Activated CD4-positive, alpha-beta T cell treated with anti-CD3 and anti-CD28 coated beads for 36 hours (primary cell): ENCODE measurements at regions of chr3 and their contacts with region 1.

Region 1: DNA sequence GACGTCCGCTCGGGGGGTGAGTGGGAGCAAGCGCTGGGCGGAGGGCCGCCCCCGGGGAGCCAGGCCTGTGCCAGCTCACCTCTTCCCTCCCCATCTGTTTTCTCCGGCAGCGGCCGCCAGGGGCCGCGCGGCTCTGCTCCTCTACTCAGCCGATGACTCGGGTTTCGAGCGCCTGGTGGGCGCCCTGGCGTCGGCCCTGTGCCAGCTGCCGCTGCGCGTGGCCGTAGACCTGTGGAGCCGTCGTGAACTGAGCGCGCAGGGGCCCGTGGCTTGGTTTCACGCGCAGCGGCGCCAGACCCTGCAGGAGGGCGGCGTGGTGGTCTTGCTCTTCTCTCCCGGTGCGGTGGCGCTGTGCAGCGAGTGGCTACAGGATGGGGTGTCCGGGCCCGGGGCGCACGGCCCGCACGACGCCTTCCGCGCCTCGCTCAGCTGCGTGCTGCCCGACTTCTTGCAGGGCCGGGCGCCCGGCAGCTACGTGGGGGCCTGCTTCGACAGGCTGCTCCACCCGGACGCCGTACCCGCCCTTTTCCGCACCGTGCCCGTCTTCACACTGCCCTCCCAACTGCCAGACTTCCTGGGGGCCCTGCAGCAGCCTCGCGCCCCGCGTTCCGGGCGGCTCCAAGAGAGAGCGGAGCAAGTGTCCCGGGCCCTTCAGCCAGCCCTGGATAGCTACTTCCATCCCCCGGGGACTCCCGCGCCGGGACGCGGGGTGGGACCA is 632 bp upstream of the CRELD1 start:
- DNase-seq: peak; percentile 95
- ATAC-seq: peak; percentile 76
- H3K4me3 Mint-ChIP-seq: peak overlapping the region; percentile 96
- H3K27ac Mint-ChIP-seq: peak overlapping the region; percentile 95
- H3K4me1 Mint-ChIP-seq: peaks cover 29% of the 10 kb centered on the region
- H3K27me3 Mint-ChIP-seq: no peaks in the 10 kb centered on the region

Region 2: DNA sequence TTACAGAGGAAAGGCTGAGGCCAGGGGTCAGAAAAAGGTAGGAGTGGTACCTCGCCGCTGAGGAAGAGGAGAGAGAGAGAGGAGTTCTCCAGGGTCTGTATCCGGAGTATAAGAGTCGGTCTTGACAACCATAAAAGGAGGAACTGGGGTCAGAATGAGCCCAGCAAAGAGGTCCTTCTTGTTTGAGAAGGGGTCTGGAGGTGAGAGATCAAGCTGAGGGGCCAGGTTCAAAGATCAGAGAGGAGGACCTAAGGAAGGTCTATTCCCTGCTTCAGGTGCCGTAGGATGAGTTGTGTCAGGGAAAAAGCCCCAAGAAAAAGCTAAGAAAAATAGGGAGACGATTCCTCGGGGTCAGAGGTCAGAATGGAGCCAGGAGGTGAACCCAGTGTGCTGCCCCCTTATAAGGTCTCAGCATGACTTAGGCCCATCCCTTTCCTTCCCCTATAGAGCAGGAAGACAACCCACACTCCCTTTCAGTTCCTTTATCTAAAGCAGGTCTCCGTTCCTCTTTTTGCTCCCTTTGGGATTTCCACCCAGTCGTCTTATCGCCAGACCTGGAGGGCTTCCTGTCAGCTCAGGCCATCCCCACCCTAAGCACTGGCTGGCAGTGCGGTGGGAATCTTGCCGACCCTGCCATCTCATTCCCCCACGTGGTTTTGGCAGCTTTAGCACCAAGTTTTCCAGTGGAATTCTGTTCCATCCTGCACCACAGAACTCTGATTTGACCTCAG is 283.0 kb before region 1 on chr3:
- CTCF ChIA-PET with region 1: interaction called, 3 read pairs
- POLR2A ChIA-PET with region 1: interaction called, 3 read pairs
- intact Hi-C with region 1: loop called in 1 of 2 experiments (anchors 1 kb)
- DNase-seq: no peak
- ATAC-seq: peak; percentile 1
- H3K4me3 Mint-ChIP-seq: peak overlapping the region; percentile 95
- H3K27ac Mint-ChIP-seq: peak overlapping the region; percentile 92
- H3K4me1 Mint-ChIP-seq: peaks cover 24% of the 10 kb centered on the region
- H3K27me3 Mint-ChIP-seq: no peaks in the 10 kb centered on the region

Region 3: GRCh38 chr3:9779721-9780457 is 153.1 kb before region 1 on chr3:
- CTCF ChIA-PET with region 1: no interaction called
- POLR2A ChIA-PET with region 1: no interaction called
- intact Hi-C with region 1: loop called in 1 of 2 experiments (anchors 1 kb)
- DNase-seq: peak; percentile 56
- ATAC-seq: peak; percentile 22
- H3K4me3 Mint-ChIP-seq: no peak overlapping the region
- H3K27ac Mint-ChIP-seq: peak overlapping the region; percentile 95
- H3K4me1 Mint-ChIP-seq: peaks cover 61% of the 10 kb centered on the region
- H3K27me3 Mint-ChIP-seq: no peaks in the 10 kb centered on the region

Region 4: DNA sequence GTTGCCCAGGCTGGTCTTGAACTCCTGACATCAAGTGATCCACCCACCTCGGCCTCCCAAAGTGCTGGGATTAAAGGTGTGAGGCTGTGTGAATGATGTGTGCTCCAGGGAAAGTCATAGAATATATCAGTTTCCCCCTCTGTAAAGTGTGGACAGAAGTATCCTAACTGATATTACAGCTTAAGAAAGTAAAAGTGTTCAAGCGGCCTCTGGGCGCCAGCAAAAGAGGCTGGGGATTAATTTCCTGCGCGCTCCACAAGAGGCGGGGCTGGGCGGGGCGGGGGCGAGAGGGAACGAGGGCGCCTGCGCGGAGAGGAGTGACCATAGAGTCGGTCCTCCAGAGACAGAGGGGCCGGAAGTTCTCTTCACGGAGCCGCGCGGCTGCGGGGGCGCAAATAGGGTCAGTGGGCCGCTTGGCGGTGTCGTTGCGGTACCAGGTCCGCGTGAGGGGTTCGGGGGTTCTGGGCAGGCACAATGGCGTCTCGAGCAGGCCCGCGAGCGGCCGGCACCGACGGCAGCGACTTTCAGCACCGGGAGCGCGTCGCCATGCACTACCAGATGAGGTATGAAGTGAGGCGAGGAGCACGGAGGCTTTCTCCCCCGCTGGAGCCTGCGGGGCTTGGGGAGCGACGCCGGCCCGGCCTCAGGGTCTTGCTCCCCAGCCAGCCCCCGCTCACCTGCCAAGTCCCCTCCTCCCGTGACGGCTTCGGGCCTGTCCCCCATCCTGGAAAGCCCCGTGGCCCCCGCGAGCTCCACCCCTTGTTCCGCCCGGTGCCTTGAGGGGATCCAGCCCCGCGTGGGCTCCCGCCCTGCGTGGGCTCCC is 42.5 kb before region 1 on chr3 and contains the start of gene JAGN1:
- CTCF ChIA-PET with region 1: interaction called, 17 read pairs
- POLR2A ChIA-PET with region 1: interaction called, 4 read pairs
- intact Hi-C with region 1: loop called (anchors 1 kb)
- DNase-seq: peak; percentile 96
- ATAC-seq: peak; percentile 82
- H3K4me3 Mint-ChIP-seq: peak within 1 kb of the TSS; percentile 96
- H3K27ac Mint-ChIP-seq: peak within 1 kb of the TSS; percentile 98
- H3K4me1 Mint-ChIP-seq: peaks cover 34% of the 10 kb centered on the region
- H3K27me3 Mint-ChIP-seq: no peaks in the 10 kb centered on the region
- total RNA-seq, gene JAGN1: 27.1 to 33.0 TPM

Region 5: GRCh38 chr3:9951962-9952805 is 19.2 kb after region 1 on chr3 and contains the start of gene PRRT3:
- CTCF ChIA-PET with region 1: interaction called, 35 read pairs
- POLR2A ChIA-PET with region 1: interaction called, 4 read pairs
- intact Hi-C with region 1: loop called (anchors 1 kb)
- DNase-seq: peak; percentile 84
- ATAC-seq: peak; percentile 84
- H3K4me3 Mint-ChIP-seq: peak within 1 kb of the TSS; percentile 86
- H3K27ac Mint-ChIP-seq: peak within 1 kb of the TSS; percentile 40
- H3K4me1 Mint-ChIP-seq: peaks cover 15% of the 10 kb centered on the region
- H3K27me3 Mint-ChIP-seq: no peaks in the 10 kb centered on the region
- total RNA-seq, gene PRRT3: 8.1 to 9.7 TPM

Region 6: DNA sequence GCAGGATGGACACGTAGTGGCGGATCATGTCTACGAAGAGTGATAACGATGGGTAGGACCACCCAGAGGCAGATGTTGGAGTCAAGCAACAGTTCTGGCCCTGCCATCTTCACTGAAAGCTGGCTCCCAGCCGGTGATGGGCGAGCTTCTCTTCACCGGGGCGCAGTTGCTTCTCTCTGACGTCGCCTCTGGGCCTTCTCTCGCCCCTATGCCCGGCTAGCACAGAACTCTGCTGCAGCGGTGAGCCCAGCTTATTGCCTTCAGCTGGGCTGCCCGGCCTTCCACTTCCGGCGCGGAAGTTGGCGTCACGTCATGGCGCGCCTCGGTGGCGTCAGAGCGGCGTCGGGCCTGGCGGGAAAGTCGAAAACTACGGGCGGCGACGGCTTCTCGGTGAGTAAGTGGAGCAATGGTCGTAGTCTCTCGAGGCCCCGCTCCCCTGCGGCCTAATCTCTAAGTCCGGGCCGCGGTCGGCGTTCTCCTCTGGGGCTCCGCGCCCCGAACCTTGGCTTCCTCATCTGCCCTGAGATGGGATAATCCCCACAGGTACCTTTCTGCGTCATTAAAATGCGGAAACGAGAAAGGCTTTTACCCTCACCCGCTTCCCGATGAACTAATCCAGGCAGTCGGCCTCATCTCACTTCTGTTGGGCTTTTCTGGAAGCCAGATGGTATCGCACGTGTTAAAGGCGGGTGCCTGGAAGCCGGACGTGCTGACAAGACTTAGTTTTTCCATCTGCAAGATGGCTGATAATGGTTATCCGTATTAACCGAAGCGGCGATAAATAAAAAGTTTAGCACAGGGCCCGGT is 93.3 kb after region 1 on chr3 and contains the start of gene FANCD2:
- CTCF ChIA-PET with region 1: no interaction called
- POLR2A ChIA-PET with region 1: no interaction called
- intact Hi-C with region 1: loop called in 1 of 2 experiments (anchors 1 kb)
- DNase-seq: peak; percentile 95
- ATAC-seq: peak; percentile 91
- H3K4me3 Mint-ChIP-seq: peak within 1 kb of the TSS; percentile 95
- H3K27ac Mint-ChIP-seq: peak within 1 kb of the TSS; percentile 99
- H3K4me1 Mint-ChIP-seq: peaks cover 25% of the 10 kb centered on the region
- H3K27me3 Mint-ChIP-seq: no peaks in the 10 kb centered on the region
- total RNA-seq, gene FANCD2: 86.4 to 87.7 TPM

Region 7: GRCh38 chr3:10248184-10249080 is 315.4 kb after region 1 on chr3 and contains the start of gene TATDN2:
- CTCF ChIA-PET with region 1: interaction called, 4 read pairs
- POLR2A ChIA-PET with region 1: no interaction called
- intact Hi-C with region 1: loop called in 1 of 2 experiments (anchors 1 kb)
- DNase-seq: peak; percentile 97
- ATAC-seq: peak; percentile 94
- H3K4me3 Mint-ChIP-seq: peak within 1 kb of the TSS; percentile 97
- H3K27ac Mint-ChIP-seq: peak within 1 kb of the TSS; percentile 96
- H3K4me1 Mint-ChIP-seq: peaks cover 63% of the 10 kb centered on the region
- H3K27me3 Mint-ChIP-seq: no peaks in the 10 kb centered on the region
- total RNA-seq, gene TATDN2: 40.0 to 40.2 TPM

Region 8: DNA sequence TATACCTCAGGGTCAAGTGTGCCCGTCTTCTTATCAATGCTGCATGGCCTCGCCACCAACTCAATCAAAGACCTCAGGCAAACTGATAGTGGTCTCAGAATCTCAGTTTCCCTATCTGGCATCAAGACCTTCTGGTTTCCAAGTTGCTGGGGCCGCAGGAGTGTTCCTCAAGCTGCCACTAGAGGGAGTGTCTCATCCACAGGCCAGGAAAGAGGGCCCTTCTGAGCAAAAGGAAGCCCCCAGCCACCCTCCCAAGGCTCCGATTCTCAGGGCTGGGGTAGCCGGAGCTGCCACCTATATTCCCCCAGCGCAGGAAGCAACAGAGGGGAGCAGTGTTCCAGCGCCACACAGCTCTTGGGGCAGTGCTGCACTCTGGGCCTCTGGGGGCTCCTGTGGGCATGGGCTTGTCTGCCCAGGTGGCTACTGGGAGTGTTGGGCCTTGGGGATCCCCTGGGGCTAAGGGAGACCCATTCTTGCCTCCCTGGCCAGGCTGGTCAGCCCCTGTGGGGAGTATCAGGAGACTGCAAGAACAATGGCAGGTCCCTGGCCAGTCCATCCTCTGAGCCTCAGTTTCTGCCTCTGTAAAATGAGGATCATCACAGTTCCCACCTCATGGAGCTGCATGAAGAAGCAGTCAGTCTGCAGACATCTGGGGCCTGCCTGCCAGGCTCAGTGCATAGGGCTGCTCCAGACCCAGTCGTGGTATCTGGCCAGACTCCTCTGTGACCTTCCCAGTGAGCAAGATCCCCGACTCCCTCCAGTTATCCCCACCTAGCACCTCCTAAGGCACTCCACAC is 411.3 kb after region 1 on chr3:
- CTCF ChIA-PET with region 1: no interaction called
- POLR2A ChIA-PET with region 1: no interaction called
- intact Hi-C with region 1: no loop called
- DNase-seq: peak; percentile 72
- ATAC-seq: peak; percentile 71
- H3K4me3 Mint-ChIP-seq: no peak overlapping the region
- H3K27ac Mint-ChIP-seq: no peak overlapping the region
- H3K4me1 Mint-ChIP-seq: no peaks in the 10 kb centered on the region
- H3K27me3 Mint-ChIP-seq: peaks cover 2% of the 10 kb centered on the region

Region 9: GRCh38 chr3:10703875-10704274 is 770.9 kb after region 1 on chr3:
- CTCF ChIA-PET with region 1: no interaction called
- POLR2A ChIA-PET with region 1: no interaction called
- intact Hi-C with region 1: no loop called
- DNase-seq: peak; percentile 30
- ATAC-seq: peak; percentile 42
- H3K4me3 Mint-ChIP-seq: no peak overlapping the region
- H3K27ac Mint-ChIP-seq: no peak overlapping the region
- H3K4me1 Mint-ChIP-seq: peaks cover 10% of the 10 kb centered on the region
- H3K27me3 Mint-ChIP-seq: peaks cover 56% of the 10 kb centered on the region